Esophagus muscularis mucosa (tissue), 4 donors: ENCODE measurements at regions of chr11 and their contacts with region 1.

Region 1: GRCh38 chr11:122108192-122108799 is 7.7 kb downstream of the BLID start:
- DNase-seq: no peak
- H3K4me3 ChIP-seq: no peak overlapping the region
- H3K27ac ChIP-seq: no peak overlapping the region
- H3K4me1 ChIP-seq: peaks cover 12 to 25% (median 17%) of the 10 kb centered on the region in 4 donors
- H3K27me3 ChIP-seq: no peaks in the 10 kb centered on the region
- CTCF ChIP-seq: peak; percentile 21 to 53 (median 34)
- EP300 ChIP-seq: no peak
- POLR2A ChIP-seq: no peak

Region 2: GRCh38 chr11:122309262-122309925 is 201.1 kb after region 1 on chr11:
- intact Hi-C with region 1: loop called (anchors 10 kb)
- DNase-seq: no peak
- H3K4me3 ChIP-seq: peak overlapping the region; percentile 19 to 40 (median 28)
- H3K27ac ChIP-seq: peak overlapping the region in 2 of 4 donors; percentile 27 to 56
- H3K4me1 ChIP-seq: peaks cover 0 to 46% (median 42%) of the 10 kb centered on the region in 4 donors
- H3K27me3 ChIP-seq: no peaks in the 10 kb centered on the region
- CTCF ChIP-seq: no peak
- EP300 ChIP-seq: no peak
- POLR2A ChIP-seq: no peak